H1 (cell line): ENCODE measurements at regions of chr7 and their contacts with region 1.

Region 1: DNA sequence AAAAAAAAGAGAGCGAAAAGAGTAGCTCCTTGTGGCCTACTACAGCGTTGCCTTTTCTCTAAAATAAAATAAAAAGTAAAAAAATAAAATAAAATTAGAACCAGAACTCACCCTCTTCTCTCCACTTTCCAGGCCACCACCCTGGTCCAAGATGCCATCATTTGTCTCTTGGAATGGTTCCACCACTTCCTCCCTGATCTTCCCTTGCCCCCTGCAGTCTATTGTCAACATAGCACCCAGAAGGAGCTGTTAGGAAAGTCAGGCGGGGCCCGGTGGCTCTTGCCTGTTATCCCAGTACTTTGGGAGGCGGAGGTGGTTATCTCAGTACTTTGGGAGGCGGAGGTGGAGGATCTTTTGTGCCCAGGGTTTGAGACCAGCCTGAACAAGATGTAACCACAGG is 7.6 kb upstream of the GRID2IP start:
- DNase-seq: no peak
- H3K4me3 ChIP-seq: no peak overlapping the region
- H3K27ac ChIP-seq: no peak overlapping the region
- H3K4me1 ChIP-seq: peaks cover 0 to 3% (median 1%) of the 10 kb centered on the region in 4 experiments; a peak in 3 of 7 replicates
- H3K27me3 ChIP-seq: no peaks in the 10 kb centered on the region
- CTCF ChIP-seq: peak; percentile 24 to 58 (median 56)
- EP300 ChIP-seq: no peak
- POLR2A ChIP-seq: no peak
- RAD21 ChIP-seq: peak; percentile 39 to 63; a peak in 3 of 4 replicates

Region 2: GRCh38 chr7:6476596-6477299 is 82.1 kb before region 1 on chr7:
- CTCF ChIA-PET with region 1: no interaction called
- POLR2A ChIA-PET with region 1: no interaction called
- DNase-seq: no peak
- H3K4me3 ChIP-seq: no peak overlapping the region
- H3K27ac ChIP-seq: no peak overlapping the region
- H3K4me1 ChIP-seq: no peaks in the 10 kb centered on the region
- H3K27me3 ChIP-seq: no peaks in the 10 kb centered on the region
- CTCF ChIP-seq: no peak
- EP300 ChIP-seq: no peak
- POLR2A ChIP-seq: no peak
- RAD21 ChIP-seq: no peak

Region 3: DNA sequence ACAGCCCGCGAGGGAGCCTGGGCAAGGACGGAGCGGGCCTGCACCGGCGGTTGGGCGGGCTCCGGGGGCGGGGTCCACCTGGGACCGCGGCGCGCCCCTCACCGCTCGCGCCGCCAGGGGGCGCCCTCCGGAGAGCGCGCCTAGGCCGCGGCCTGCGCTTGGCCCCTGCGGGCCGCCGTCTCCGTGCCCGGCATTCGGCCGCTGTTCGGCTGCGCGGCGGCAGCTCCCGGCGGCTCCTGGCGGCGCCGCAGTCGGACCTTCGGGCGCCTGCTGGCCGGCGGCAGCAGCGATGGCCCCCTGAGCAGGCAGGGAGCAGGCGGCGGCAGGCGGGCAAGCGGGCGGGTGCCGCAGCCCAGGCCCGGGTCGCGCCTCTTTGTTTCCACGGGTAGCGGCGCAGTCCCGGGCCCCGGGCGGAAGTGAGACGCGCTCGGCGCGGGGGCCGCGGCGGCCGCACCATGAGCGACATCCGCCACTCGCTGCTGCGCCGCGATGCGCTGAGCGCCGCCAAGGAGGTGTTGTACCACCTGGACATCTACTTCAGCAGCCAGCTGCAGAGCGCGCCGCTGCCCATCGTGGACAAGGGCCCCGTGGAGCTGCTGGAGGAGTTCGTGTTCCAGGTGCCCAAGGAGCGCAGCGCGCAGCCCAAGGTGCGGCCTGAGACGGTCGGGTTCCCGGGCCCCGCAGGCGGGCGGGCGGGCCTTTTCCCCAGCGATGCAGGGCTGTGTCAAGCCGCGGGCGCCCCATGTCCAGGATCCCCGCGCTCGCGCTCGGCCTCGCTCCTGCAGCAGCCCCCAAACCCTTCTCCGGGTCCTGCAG is 31.2 kb after region 1 on chr7 and contains the start of gene INTS15:
- CTCF ChIA-PET with region 1: interaction called, 14 read pairs
- POLR2A ChIA-PET with region 1: interaction called, 3 read pairs
- DNase-seq: peak in 1 of 2 experiments; percentile 87
- H3K4me3 ChIP-seq: peak within 1 kb of the TSS; percentile 77 to 86 (median 80)
- H3K27ac ChIP-seq: no peak within 1 kb of the TSS
- H3K4me1 ChIP-seq: peaks cover 0 to 3% (median 0%) of the 10 kb centered on the region in 4 experiments; a peak in 1 of 7 replicates
- H3K27me3 ChIP-seq: no peaks in the 10 kb centered on the region
- CTCF ChIP-seq: peak; percentile 81 to 95 (median 84)
- EP300 ChIP-seq: no peak
- POLR2A ChIP-seq: peak; percentile 83 to 90
- RAD21 ChIP-seq: peak in 1 of 2 experiments; percentile 56; a peak in 2 of 4 replicates
- total RNA-seq, gene INTS15: 25.7 and 26.1 TPM in 2 replicates